Common myeloid progenitor, CD34-positive (primary cell): ENCODE measurements at regions of chr19 and their contacts with region 1.

Region 1: GRCh38 chr19:41541990-41542584 is 33.9 kb upstream of the CEACAM21 start:
- DNase-seq: peak; percentile 75 to 83 (median 82)
- H3K4me3 ChIP-seq: peak overlapping the region in 1 of 7 experiments; percentile 43
- H3K27ac ChIP-seq: no peak overlapping the region
- H3K4me1 ChIP-seq: peaks cover 12 to 47% (median 35%) of the 10 kb centered on the region in 4 experiments
- H3K27me3 ChIP-seq: no peaks in the 10 kb centered on the region

Region 2: GRCh38 chr19:41531438-41532311 is 10.4 kb before region 1 on chr19:
- CTCF ChIA-PET with region 1: interaction called, 11 read pairs
- POLR2A ChIA-PET with region 1: interaction called, 7 read pairs
- DNase-seq: peak; percentile 97 to 98 (median 98)
- H3K4me3 ChIP-seq: peak overlapping the region in 6 of 7 experiments; percentile 39 to 69 (median 60)
- H3K27ac ChIP-seq: peak overlapping the region in 1 of 2 experiments; percentile 79
- H3K4me1 ChIP-seq: peaks cover 45 to 77% (median 64%) of the 10 kb centered on the region in 4 experiments
- H3K27me3 ChIP-seq: no peaks in the 10 kb centered on the region

Region 3: DNA sequence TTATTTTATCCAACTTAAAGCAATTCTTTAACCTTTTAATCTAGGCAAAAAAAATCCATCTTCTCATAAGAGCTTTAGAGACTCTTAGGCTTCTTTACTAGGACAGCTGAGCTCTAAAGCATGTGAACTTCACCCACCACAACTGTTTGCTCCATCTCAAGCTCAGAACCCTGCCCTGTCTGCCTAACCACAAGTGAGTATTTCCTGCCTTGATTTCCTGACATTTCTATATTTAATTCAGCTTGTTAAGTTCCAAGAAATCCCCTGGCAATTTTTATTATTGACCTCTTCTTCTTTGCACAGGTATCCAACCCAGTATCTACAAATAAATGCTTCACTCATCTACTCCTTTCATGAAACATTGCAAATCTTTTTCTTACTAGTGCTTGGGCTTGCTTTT is 12.8 kb after region 1 on chr19:
- CTCF ChIA-PET with region 1: interaction called, 110 read pairs
- POLR2A ChIA-PET with region 1: no interaction called
- DNase-seq: peak in 2 of 3 donors; percentile 74 to 85
- H3K4me3 ChIP-seq: peak overlapping the region in 4 of 7 experiments; percentile 21 to 56 (median 38)
- H3K27ac ChIP-seq: no peak overlapping the region
- H3K4me1 ChIP-seq: peaks cover 23 to 98% (median 65%) of the 10 kb centered on the region in 4 experiments
- H3K27me3 ChIP-seq: no peaks in the 10 kb centered on the region